ENCODE measurements at regions of chr18 and their contacts with region 1.

Region 1: DNA sequence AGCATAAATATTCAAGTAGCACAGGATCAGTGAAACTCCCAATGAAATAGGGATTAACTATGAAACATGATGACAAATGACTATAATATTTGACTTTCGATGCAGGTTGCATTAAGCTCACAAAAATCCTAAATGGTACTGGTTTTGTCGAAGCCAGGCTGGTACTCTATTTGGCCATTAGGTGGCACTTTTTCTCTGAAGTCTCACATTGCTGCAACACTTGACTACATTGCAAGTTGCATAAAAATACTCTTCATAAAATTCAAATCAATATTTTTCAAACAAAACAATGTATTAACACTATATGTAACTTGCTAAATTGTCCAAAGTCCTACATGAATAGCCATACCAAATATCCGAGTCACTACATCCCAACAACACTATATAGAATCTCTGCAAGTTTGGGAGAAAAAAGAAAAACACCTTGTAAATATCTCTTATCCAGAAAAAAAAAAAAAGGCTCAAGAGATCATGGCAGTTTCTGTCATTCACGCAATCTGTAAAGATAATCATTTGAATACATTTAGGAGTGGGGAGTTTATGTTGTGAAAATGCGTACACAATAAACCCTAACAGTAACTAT is 9.5 kb downstream of the RTTN start:
- DNase-seq: no peak
- ATAC-seq: peak; percentile 74 to 85 (median 78)
- H3K4me3 ChIP-seq: no peak overlapping the region
- H3K27ac ChIP-seq: no peak overlapping the region
- H3K4me1 ChIP-seq: peaks cover 0 to 8% (median 0%) of the 10 kb centered on the region in 4 donors
- H3K27me3 ChIP-seq: no peaks in the 10 kb centered on the region
- CTCF ChIP-seq: peak; percentile 78 to 87 (median 82)
- POLR2A ChIP-seq: no peak

Region 2: DNA sequence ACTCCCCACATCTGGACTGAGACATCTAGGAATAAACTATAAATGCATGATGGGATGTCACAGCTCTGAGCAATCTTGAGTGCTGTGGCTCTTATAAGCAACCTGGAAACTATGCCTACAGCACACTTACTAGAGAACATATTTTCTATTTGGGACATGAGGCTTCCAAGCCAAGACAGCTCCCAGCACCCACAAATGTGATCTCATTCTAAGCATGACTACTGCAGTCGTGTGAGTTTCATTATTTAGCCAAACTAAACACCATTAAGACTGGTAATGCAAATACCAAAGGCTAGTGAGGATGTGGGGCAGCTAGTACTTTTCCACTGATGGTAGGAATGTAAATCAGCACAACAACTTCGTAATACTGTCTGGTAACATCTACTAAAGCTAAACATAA is 62.9 kb before region 1 on chr18:
- intact Hi-C with region 1: no loop called
- DNase-seq: no peak
- ATAC-seq: no peak
- H3K4me3 ChIP-seq: no peak overlapping the region
- H3K27ac ChIP-seq: no peak overlapping the region
- H3K4me1 ChIP-seq: no peaks in the 10 kb centered on the region
- H3K27me3 ChIP-seq: no peaks in the 10 kb centered on the region
- CTCF ChIP-seq: no peak
- POLR2A ChIP-seq: no peak

Region 3: GRCh38 chr18:70373042-70373519 is 177.1 kb after region 1 on chr18:
- intact Hi-C with region 1: no loop called
- DNase-seq: no peak
- ATAC-seq: peak in 1 of 4 donors; percentile 48
- H3K4me3 ChIP-seq: no peak overlapping the region
- H3K27ac ChIP-seq: no peak overlapping the region
- H3K4me1 ChIP-seq: peaks cover 0 to 24% (median 9%) of the 10 kb centered on the region in 4 donors
- H3K27me3 ChIP-seq: no peaks in the 10 kb centered on the region
- CTCF ChIP-seq: no peak
- POLR2A ChIP-seq: no peak

Region 4: GRCh38 chr18:70431203-70431624 is 235.3 kb after region 1 on chr18:
- intact Hi-C with region 1: loop called (anchors 5 to 10 kb)
- DNase-seq: no peak
- ATAC-seq: peak; percentile 45 to 75 (median 68)
- H3K4me3 ChIP-seq: no peak overlapping the region
- H3K27ac ChIP-seq: peak overlapping the region; percentile 29 to 56 (median 42)
- H3K4me1 ChIP-seq: peaks cover 0 to 6% (median 3%) of the 10 kb centered on the region in 4 donors
- H3K27me3 ChIP-seq: no peaks in the 10 kb centered on the region
- CTCF ChIP-seq: no peak
- POLR2A ChIP-seq: no peak